CD14-positive monocyte (primary cell): ENCODE measurements at regions of chr1 and their contacts with region 1.

Region 1: GRCh38 chr1:24964811-24965570 is 34.9 kb upstream of the RUNX3 start:
- DNase-seq: peak; percentile 78 to 87 (median 82)
- H3K4me3 ChIP-seq: no peak overlapping the region
- H3K4me3 Mint-ChIP-seq: peak overlapping the region in 1 of 2 donors; percentile 23
- H3K27ac ChIP-seq: peak overlapping the region; percentile 55 to 69
- H3K27ac Mint-ChIP-seq: peak overlapping the region; percentile 40 to 94 (median 89)
- H3K4me1 ChIP-seq: peaks cover 33 to 36% of the 10 kb centered on the region in 2 donors
- H3K4me1 Mint-ChIP-seq: peaks cover 31% of the 10 kb centered on the region
- H3K27me3 ChIP-seq: no peaks in the 10 kb centered on the region
- H3K27me3 Mint-ChIP-seq: peaks cover 8 to 18% (median 11%) of the 10 kb centered on the region in 3 donors
- CTCF ChIP-seq: no peak

Region 2: GRCh38 chr1:24930204-24931145 is 34.5 kb before region 1 on chr1 and contains the start of gene RUNX3:
- intact Hi-C with region 1: loop called in 1 of 2 experiments (anchors 5 kb)
- DNase-seq: peak; percentile 78 to 85 (median 83)
- H3K4me3 ChIP-seq: peak within 1 kb of the TSS; percentile 68 to 85 (median 69)
- H3K4me3 Mint-ChIP-seq: peak within 1 kb of the TSS; percentile 93
- H3K27ac ChIP-seq: peak within 1 kb of the TSS; percentile 47 to 81
- H3K27ac Mint-ChIP-seq: peak within 1 kb of the TSS; percentile 84 to 93 (median 89)
- H3K4me1 ChIP-seq: peaks cover 39 to 57% of the 10 kb centered on the region in 2 donors
- H3K4me1 Mint-ChIP-seq: peaks cover 35% of the 10 kb centered on the region
- H3K27me3 ChIP-seq: peaks cover 0 to 59% of the 10 kb centered on the region in 2 donors
- H3K27me3 Mint-ChIP-seq: peaks cover 26 to 69% (median 68%) of the 10 kb centered on the region in 3 donors
- CTCF ChIP-seq: peak; percentile 30
- polyA plus RNA-seq, gene RUNX3: 4.4 to 27.9 (median 6.7) TPM

Region 3: DNA sequence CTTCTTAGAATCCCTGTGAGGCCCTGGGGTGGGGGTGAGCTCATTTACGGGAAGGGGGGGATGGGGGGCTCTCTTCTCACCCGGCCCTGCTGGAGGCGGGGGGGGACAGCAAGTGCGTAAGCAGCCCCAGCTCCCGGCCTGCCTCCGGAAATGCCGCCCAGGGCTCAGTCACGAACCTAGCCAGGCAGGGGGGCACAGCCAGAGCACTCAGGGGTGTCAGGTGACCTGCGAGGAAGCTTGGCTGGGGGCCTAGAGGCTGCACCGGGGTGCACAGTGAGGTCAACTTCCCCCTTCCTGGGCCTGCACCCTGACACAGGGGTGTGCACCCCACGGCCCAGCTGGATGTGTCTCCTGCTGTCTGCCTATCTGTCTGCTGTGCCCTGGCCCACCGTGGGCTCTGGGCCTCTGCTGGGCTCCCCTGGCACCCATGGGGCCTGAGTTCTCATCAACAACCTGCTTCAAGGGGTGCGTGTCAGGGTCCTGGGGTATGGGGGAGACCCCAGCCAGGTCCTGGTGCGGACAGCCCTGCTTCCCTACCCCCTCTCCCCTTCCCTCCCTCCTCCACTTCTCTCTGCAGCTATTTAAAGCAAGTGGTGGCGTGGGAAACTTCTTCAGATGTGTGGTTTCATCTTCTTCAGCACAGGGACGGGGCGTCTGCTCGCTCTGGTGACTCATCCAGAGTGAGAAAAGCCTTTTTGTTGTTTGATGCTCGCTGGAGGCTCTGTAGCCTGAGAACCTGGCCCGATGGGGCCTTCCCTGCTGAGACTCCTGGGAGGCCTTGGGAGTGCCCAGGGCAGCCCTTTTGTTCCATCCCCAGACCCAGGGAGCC is 57.6 kb after region 1 on chr1:
- intact Hi-C with region 1: loop called (anchors 2 to 5 kb)
- DNase-seq: peak; percentile 99 to 100 (median 100)
- H3K4me3 ChIP-seq: peak overlapping the region in 2 of 3 experiments; percentile 15 to 49
- H3K4me3 Mint-ChIP-seq: peak overlapping the region; percentile 69 to 84
- H3K27ac ChIP-seq: peak overlapping the region; percentile 90 to 99
- H3K27ac Mint-ChIP-seq: peak overlapping the region; percentile 97 to 99 (median 98)
- H3K4me1 ChIP-seq: peaks cover 66 to 72% of the 10 kb centered on the region in 2 donors
- H3K4me1 Mint-ChIP-seq: peaks cover 74% of the 10 kb centered on the region
- H3K27me3 ChIP-seq: peaks cover 0 to 17% of the 10 kb centered on the region in 2 donors
- H3K27me3 Mint-ChIP-seq: peaks cover 18 to 41% (median 30%) of the 10 kb centered on the region in 3 donors
- CTCF ChIP-seq: no peak

Region 4: GRCh38 chr1:25037174-25038074 is 72.4 kb after region 1 on chr1:
- intact Hi-C with region 1: loop called in 1 of 2 experiments (anchors 2 kb)
- DNase-seq: peak in 2 of 3 donors; percentile 78 to 81
- H3K4me3 ChIP-seq: no peak overlapping the region
- H3K4me3 Mint-ChIP-seq: no peak overlapping the region
- H3K27ac ChIP-seq: peak overlapping the region in 1 of 2 donors; percentile 55
- H3K27ac Mint-ChIP-seq: peak overlapping the region in 6 of 7 donors; percentile 43 to 88 (median 73)
- H3K4me1 ChIP-seq: peaks cover 43 to 48% of the 10 kb centered on the region in 2 donors
- H3K4me1 Mint-ChIP-seq: peaks cover 10% of the 10 kb centered on the region
- H3K27me3 ChIP-seq: peaks cover 0 to 4% of the 10 kb centered on the region in 2 donors
- H3K27me3 Mint-ChIP-seq: peaks cover 11 to 23% (median 17%) of the 10 kb centered on the region in 3 donors
- CTCF ChIP-seq: peak; percentile 90